Endothelial cell of umbilical vein (primary cell): ENCODE measurements at regions of chr17 and their contacts with region 1.

Region 1: GRCh38 chr17:39782485-39782884 is 44.7 kb downstream of the GRB7 start:
- DNase-seq: peak; percentile 3
- H3K4me3 ChIP-seq: no peak overlapping the region
- H3K27ac ChIP-seq: no peak overlapping the region
- H3K4me1 ChIP-seq: no peaks in the 10 kb centered on the region
- H3K27me3 ChIP-seq: peaks cover 36 to 59% of the 10 kb centered on the region in 2 experiments
- CTCF ChIP-seq: no peak
- POLR2A ChIP-seq: no peak

Region 2: GRCh38 chr17:39738931-39739884 is 43.3 kb before region 1 on chr17:
- CTCF ChIA-PET with region 1: no interaction called
- POLR2A ChIA-PET with region 1: no interaction called
- dilution Hi-C with region 1: no loop called
- intact Hi-C with region 1: loop called (anchors 1 kb)
- DNase-seq: no peak
- H3K4me3 ChIP-seq: no peak overlapping the region
- H3K27ac ChIP-seq: no peak overlapping the region
- H3K4me1 ChIP-seq: peaks cover 14% of the 10 kb centered on the region
- H3K27me3 ChIP-seq: peaks cover 18 to 28% of the 10 kb centered on the region in 2 experiments
- CTCF ChIP-seq: no peak
- POLR2A ChIP-seq: no peak

Region 3: GRCh38 chr17:39863918-39864746 is 81.6 kb after region 1 on chr17 and contains the start of gene IKZF3:
- CTCF ChIA-PET with region 1: no interaction called
- POLR2A ChIA-PET with region 1: no interaction called
- dilution Hi-C with region 1: no loop called
- intact Hi-C with region 1: loop called (anchors 10 kb)
- DNase-seq: peak; percentile 35
- H3K4me3 ChIP-seq: no peak within 1 kb of the TSS
- H3K27ac ChIP-seq: no peak within 1 kb of the TSS
- H3K4me1 ChIP-seq: no peaks in the 10 kb centered on the region
- H3K27me3 ChIP-seq: peaks cover 56 to 86% of the 10 kb centered on the region in 2 experiments
- CTCF ChIP-seq: no peak
- POLR2A ChIP-seq: no peak
- total RNA-seq, gene IKZF3: not detected in 2 replicates